H1 (cell line): ENCODE measurements at regions of chr4 and their contacts with region 1.

Region 1: GRCh38 chr4:3122081-3122563 is 47.6 kb downstream of the HTT start:
- DNase-seq: no peak
- H3K4me3 ChIP-seq: no peak overlapping the region
- H3K27ac ChIP-seq: no peak overlapping the region
- H3K4me1 ChIP-seq: no peaks in the 10 kb centered on the region
- H3K27me3 ChIP-seq: no peaks in the 10 kb centered on the region
- CTCF ChIP-seq: no peak
- EP300 ChIP-seq: no peak
- POLR2A ChIP-seq: no peak
- RAD21 ChIP-seq: no peak

Region 2: DNA sequence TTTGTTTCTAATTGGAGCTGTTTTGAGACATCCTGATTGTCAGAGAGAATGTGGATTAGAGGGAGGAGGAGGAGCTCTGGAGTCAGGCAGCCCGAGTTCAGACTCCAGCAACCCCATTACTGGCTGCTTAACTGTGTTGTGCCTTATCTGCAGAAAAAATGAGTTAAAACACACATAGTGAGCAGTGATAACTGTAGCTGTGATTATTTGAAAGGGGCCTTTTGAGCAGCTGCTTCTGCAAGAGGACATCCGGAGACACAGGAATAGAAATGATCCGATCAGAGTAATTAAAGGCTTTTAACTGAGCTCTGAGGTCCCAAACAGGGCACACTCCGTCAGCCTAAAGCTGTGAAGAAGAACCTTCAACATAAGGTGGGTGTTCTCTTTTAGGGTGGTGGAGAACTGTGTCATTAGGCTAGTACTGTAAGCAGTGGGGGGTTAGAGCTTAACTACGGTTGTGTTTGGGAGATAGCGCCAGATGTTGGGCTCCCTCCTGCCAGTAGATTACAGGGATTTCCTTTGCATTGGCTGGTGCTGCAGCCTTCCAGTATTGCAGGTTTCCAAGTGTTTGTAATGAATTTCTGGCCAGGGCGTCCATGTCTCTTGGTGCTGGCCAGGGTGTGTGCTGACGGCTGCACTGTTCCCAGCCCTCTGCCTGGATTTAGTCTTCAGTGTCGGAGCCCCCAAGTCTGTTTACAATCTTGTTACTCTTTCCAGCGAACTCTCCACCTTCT is 254.2 kb before region 1 on chr4:
- CTCF ChIA-PET with region 1: no interaction called
- POLR2A ChIA-PET with region 1: no interaction called
- DNase-seq: no peak
- H3K4me3 ChIP-seq: no peak overlapping the region; a peak in 1 of 8 replicates
- H3K27ac ChIP-seq: no peak overlapping the region
- H3K4me1 ChIP-seq: peaks cover 3 to 18% (median 11%) of the 10 kb centered on the region in 4 experiments; a peak in 5 of 7 replicates
- H3K27me3 ChIP-seq: no peaks in the 10 kb centered on the region
- CTCF ChIP-seq: no peak
- EP300 ChIP-seq: no peak
- POLR2A ChIP-seq: no peak
- RAD21 ChIP-seq: no peak

Region 3: GRCh38 chr4:3106339-3107186 is 15.6 kb before region 1 on chr4:
- CTCF ChIA-PET with region 1: interaction called, 10 read pairs
- POLR2A ChIA-PET with region 1: no interaction called
- DNase-seq: peak; percentile 62 to 96
- H3K4me3 ChIP-seq: no peak overlapping the region
- H3K27ac ChIP-seq: no peak overlapping the region
- H3K4me1 ChIP-seq: no peaks in the 10 kb centered on the region
- H3K27me3 ChIP-seq: no peaks in the 10 kb centered on the region
- CTCF ChIP-seq: peak; percentile 90 to 99 (median 98)
- EP300 ChIP-seq: no peak
- POLR2A ChIP-seq: no peak
- RAD21 ChIP-seq: peak; percentile 89 to 91

Region 4: DNA sequence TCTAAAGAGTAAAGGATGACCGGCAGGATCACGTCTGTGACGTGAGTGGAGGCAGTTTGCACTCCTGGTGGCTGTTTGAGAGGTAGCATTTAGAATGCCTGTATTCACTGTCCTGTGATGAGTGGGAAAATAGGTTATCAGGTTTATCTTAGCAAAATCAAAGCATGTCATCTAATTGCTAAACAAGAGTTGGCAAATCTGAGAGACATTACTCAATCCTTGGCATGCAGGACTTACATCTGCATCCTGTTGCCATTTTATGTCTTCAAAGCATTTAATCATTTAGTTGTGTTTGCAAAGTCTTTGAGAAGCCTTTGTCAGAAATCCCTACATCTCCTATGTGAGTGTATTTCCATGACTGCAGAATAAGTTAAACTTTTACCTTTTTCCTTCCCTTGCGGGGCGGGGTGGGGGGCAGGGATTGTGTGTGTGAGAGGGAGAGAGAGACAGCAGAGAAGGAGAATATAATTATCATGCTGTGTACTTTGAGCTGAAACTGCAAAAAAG is 85.5 kb after region 1 on chr4:
- CTCF ChIA-PET with region 1: no interaction called
- POLR2A ChIA-PET with region 1: no interaction called
- DNase-seq: no peak
- H3K4me3 ChIP-seq: no peak overlapping the region
- H3K27ac ChIP-seq: no peak overlapping the region
- H3K4me1 ChIP-seq: no peaks in the 10 kb centered on the region
- H3K27me3 ChIP-seq: no peaks in the 10 kb centered on the region
- CTCF ChIP-seq: no peak
- EP300 ChIP-seq: no peak
- POLR2A ChIP-seq: no peak
- RAD21 ChIP-seq: no peak

Region 5: DNA sequence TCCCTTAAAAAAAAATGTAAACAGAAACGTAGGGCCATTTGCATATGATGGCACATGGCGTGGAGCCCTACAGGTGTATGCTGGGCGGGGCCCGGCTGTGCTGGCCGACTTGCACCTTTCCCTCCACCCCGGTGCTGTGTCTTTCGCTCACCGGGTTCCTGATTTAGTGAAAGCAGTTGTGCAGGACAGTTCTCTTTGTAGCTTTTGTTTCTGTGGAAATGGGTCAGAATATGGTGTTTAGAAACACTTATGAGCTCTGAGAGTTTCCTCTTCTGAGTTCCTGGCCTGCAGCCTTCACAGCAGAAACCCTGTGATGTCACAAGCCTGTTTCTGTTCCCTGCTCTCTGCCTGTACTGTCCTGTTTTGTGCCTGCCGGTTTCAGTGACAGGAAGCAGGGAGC is 104.3 kb after region 1 on chr4:
- CTCF ChIA-PET with region 1: no interaction called
- POLR2A ChIA-PET with region 1: no interaction called
- DNase-seq: no peak
- H3K4me3 ChIP-seq: no peak overlapping the region
- H3K27ac ChIP-seq: no peak overlapping the region
- H3K4me1 ChIP-seq: no peaks in the 10 kb centered on the region
- H3K27me3 ChIP-seq: no peaks in the 10 kb centered on the region
- CTCF ChIP-seq: no peak
- EP300 ChIP-seq: no peak
- POLR2A ChIP-seq: no peak
- RAD21 ChIP-seq: no peak